ENCODE measurements at regions of chr21 and their contacts with region 1.

Region 1: DNA sequence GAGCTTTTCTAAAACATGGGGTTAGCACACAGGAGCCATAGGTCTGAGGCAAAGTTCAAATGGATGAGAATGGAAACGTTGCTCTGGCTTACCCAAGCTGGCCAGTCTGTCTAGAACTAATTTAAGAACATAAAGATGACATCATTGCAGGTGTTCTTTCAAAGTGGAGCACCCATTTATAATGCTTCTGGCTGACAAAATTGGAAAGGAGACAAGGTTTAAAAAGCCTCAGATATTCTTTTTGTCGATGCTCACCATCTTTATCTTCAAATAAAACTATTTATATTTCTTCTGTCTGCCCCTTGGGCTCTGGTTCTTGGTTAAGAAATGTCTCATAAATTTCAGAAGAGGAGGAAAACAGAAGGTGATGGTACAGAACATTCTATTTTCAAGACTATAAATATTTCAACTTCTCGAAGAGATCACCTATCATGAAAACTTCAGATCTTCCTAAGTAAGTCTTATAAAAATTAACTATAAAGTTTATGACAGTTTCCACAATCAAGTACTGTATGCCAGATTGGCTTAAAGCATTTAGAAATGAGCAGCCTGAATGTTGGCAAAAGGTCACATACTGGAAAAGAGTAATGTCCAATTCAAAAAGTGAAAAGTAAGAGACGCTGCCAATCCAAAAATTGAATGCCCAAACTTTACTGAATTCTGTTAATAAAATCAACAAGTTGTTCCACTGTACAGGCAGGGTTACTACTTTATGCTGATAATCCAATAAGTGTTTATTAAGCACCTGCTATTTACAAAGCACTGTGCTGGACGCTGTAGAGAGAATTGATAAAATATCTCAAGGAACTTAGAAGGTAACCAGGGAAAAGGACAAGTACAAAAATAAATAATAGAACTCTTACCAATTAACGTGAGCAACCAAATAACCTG is 92.0 kb downstream of the ETS2 start:
- DNase-seq: no peak
- ATAC-seq: peak; percentile 10; the same call in 1 of the 2 replicates
- H3K4me3 ChIP-seq: no peak overlapping the region
- H3K27ac ChIP-seq: no peak overlapping the region
- H3K4me1 ChIP-seq: peaks cover 23% of the 10 kb centered on the region
- H3K27me3 ChIP-seq: no peaks in the 10 kb centered on the region
- CTCF ChIP-seq: no peak

Region 2: DNA sequence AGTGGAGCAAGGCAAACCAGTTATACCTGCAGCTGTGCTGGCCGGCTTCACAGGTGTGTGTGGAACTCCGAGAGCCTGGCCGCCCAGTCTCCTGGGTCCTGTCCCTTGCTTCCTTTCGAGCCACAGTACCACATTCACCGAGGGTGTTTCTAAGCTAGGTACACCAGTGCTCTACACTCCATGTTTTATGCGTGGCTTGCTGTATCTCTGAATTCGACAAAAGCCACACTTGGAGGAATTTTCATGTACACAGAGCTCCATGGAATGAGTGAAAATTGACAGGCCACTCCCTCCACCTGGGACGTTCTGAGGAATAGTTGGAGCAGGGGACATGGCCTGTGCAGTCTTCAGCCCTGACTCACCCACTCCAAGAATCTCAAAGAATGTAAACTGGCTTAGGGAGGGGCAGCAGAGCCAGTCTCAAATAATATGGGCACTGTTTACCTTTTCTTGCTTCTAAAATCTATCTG is 78.0 kb before region 1 on chr21:
- CTCF ChIA-PET with region 1: no interaction called
- POLR2A ChIA-PET with region 1: no interaction called
- intact Hi-C with region 1: loop called (anchors 5 kb)
- DNase-seq: peak; percentile 95
- ATAC-seq: peak; percentile 92
- H3K4me3 ChIP-seq: peak overlapping the region; percentile 29
- H3K27ac ChIP-seq: peak overlapping the region; percentile 56
- H3K4me1 ChIP-seq: peaks cover 56% of the 10 kb centered on the region
- H3K27me3 ChIP-seq: no peaks in the 10 kb centered on the region
- CTCF ChIP-seq: no peak

Region 3: DNA sequence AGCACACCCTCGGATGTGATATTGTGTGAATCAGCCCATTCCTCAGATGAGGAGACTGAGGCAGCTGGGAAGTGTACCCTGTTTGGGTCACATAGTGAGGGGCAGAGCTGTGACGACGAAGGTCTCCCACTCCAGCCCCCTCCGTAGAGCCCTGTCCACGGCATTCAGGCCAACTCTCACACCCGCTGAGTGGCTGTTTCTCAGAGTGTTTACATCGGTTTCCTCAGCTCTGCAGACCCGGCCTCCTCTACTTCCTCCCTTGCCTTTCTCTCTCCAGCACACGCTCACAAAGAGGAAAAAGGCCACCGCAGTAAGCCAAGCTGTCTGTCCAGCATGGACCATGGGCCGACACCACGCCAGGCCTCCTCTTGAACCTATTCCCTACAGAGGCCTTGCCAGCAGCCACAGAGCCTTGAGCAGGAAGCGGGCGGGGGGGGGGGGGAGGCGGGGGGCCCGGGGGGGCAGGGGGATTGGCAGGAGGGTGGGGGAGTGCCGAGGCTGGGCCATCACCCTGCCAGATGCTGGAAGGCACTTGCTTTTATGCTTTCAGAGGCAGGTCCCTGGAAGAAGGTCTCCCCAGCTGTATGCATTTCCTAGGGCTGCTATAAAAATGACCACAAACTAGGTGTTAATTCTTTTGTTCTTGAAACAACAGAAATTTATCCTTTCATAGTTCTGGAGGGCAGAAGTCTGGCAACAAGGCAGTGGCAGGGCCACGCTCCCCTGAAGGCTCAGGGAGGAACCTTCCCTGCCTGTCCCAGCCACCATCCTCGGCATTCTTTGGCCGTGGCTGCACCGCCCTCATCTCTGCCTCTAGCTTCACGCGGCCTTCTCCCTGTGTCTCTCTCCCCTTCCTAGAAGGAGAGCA is 107.1 kb after region 1 on chr21:
- CTCF ChIA-PET with region 1: no interaction called
- POLR2A ChIA-PET with region 1: no interaction called
- intact Hi-C with region 1: no loop called
- DNase-seq: no peak
- ATAC-seq: no peak
- H3K4me3 ChIP-seq: no peak overlapping the region
- H3K27ac ChIP-seq: no peak overlapping the region
- H3K4me1 ChIP-seq: peaks cover 15% of the 10 kb centered on the region
- H3K27me3 ChIP-seq: no peaks in the 10 kb centered on the region
- CTCF ChIP-seq: no peak

Measured in PC-3 (cell line).